ENCODE measurements at regions of chrX and their contacts with region 1.

Region 1: GRCh38 chrX:100636321-100636991 is at the start of gene TSPAN6:
- H3K4me3 ChIP-seq: peak within 1 kb of the TSS; percentile 62
- H3K27ac ChIP-seq: peak within 1 kb of the TSS; percentile 67; the same call in 1 of the 2 replicates
- H3K4me1 ChIP-seq: no peaks in the 10 kb centered on the region
- CTCF ChIP-seq: no peak

Region 2: GRCh38 chrX:100615005-100615404 is 21.5 kb before region 1 on chrX:
- CTCF ChIA-PET with region 1: interaction called, 10 read pairs
- POLR2A ChIA-PET with region 1: interaction called, 6 read pairs
- H3K4me3 ChIP-seq: no peak overlapping the region
- H3K27ac ChIP-seq: no peak overlapping the region
- H3K4me1 ChIP-seq: no peaks in the 10 kb centered on the region
- CTCF ChIP-seq: no peak

Region 3: DNA sequence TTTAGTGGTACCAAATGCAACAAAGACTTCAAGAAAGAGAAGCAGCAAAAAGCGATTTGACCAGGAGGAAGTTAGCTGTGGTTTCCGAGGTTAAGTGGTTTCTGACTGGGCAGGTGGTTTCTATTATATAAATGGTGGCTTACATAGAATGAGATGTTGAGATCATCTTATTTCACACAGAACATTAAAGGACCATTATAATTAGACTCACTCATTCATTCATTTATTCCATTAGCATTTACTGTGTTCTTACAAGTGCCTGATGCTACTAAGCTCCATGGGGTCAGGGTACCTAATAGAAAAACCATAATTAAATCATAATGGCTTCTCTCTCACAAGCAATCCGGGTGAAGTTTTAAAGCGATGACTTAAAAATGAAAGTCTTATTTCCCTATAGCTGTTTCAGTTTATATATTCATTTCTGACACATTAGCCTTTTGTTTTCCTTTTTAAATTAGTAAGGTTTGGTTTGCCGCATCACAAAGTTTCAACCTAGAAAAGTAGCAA is 10.4 kb before region 1 on chrX:
- CTCF ChIA-PET with region 1: interaction called, 16 read pairs
- POLR2A ChIA-PET with region 1: no interaction called
- H3K4me3 ChIP-seq: no peak overlapping the region
- H3K27ac ChIP-seq: no peak overlapping the region
- H3K4me1 ChIP-seq: no peaks in the 10 kb centered on the region
- CTCF ChIP-seq: no peak

Region 4: DNA sequence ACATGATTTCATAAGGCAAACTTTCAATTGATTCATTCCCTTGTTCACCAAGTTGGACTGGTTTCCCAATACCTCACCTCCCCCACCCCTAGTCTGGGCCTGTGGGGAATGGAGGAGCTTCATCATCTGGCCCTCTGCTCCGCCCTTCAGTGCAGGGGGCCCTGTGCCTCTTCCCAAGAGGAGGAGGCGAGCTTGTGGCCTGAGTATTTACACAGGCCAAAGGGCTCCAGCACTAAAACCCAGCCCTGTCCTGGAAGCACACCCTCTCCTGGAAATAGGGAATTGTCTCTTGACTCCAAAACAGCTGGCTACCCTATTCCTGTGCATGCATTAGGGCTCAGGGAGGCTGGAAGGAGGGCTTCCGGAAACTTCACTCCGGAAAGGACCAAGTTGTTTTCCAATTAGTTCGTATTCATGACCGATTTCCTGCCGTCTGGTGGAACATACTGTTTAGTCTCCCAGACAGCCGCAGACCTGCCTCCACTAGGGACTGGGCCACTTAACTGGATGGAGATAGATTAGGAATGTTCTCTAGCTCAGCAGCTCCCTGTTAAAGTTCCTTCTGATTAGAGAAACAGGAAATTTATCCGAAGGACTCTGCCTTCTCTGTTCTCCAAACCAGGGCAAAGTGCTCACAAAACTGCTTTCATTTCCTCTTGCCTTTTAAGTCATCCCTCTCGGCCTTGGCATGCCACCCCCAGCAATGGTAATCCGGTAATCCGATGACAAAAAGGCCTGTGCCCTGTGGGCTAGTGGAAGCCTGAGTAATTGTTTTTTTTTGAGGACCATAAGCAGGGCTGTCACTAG is 13.3 kb after region 1 on chrX:
- CTCF ChIA-PET with region 1: interaction called, 11 read pairs
- POLR2A ChIA-PET with region 1: no interaction called
- H3K4me3 ChIP-seq: no peak overlapping the region
- H3K27ac ChIP-seq: no peak overlapping the region
- H3K4me1 ChIP-seq: no peaks in the 10 kb centered on the region
- CTCF ChIP-seq: no peak

Region 5: GRCh38 chrX:100662796-100663195 is 26.3 kb after region 1 on chrX:
- CTCF ChIA-PET with region 1: no interaction called
- POLR2A ChIA-PET with region 1: no interaction called
- H3K4me3 ChIP-seq: no peak overlapping the region
- H3K27ac ChIP-seq: no peak overlapping the region
- H3K4me1 ChIP-seq: no peaks in the 10 kb centered on the region
- CTCF ChIP-seq: no peak

Measured in HEK293 (cell line).